ENCODE measurements at regions of chr1 and their contacts with region 1.

Region 1: DNA sequence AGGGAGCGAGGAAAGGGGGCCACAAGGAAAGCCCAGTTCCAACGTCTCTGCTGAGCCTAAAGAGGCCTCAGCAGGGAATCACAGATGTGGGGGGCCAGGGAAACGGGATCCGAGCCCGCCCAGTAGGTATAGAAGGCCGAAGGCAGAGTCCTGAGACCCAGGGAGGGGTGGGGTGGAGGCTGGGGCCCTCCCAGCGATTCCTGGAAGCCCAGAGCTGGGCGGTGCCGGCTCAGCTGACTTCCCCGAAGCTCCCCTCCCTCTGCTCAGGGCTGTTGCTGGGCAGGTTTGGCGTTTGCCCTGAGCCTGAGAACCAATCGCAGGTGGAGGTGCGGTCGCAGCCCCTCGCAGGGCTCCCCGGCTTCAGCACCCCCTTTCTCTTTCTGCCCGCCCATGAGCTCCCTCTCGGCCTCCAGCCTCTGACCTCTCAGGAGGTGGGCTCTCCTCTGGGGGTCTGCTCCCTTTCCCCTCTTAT is 12.8 kb downstream of the ADAMTSL4 start:
- DNase-seq: peak; percentile 95 to 98 (median 97)
- ATAC-seq: peak; percentile 82 to 87 (median 85)
- H3K4me3 ChIP-seq: peak overlapping the region; percentile 38 to 69 (median 60)
- H3K27ac ChIP-seq: peak overlapping the region; percentile 94 to 100 (median 100)
- H3K4me1 ChIP-seq: peaks cover 28 to 88% (median 75%) of the 10 kb centered on the region in 12 donors
- H3K27me3 ChIP-seq: no peaks in the 10 kb centered on the region
- CTCF ChIP-seq: no peak
- POLR2A ChIP-seq: no peak

Region 2: GRCh38 chr1:150363426-150364230 is 198.4 kb before region 1 on chr1 and contains the start of gene RPRD2:
- intact Hi-C with region 1: loop called in 1 of 10 experiments (anchors 10 kb)
- DNase-seq: peak; percentile 99 to 100 (median 100)
- ATAC-seq: peak; percentile 98 to 99 (median 99)
- H3K4me3 ChIP-seq: peak within 1 kb of the TSS; percentile 27 to 91 (median 72)
- H3K27ac ChIP-seq: peak within 1 kb of the TSS; percentile 92 to 99 (median 98)
- H3K4me1 ChIP-seq: peaks cover 0 to 28% (median 14%) of the 10 kb centered on the region in 12 donors
- H3K27me3 ChIP-seq: no peaks in the 10 kb centered on the region
- CTCF ChIP-seq: peak in 1 of 12 donors; percentile 11
- POLR2A ChIP-seq: peak in 1 of 2 donors; percentile 62
- total RNA-seq, gene RPRD2: 19.4 to 33.4 (median 25.3) TPM

Region 3: GRCh38 chr1:150578965-150579798 is 17.2 kb after region 1 on chr1 and contains the start of gene MCL1:
- intact Hi-C with region 1: loop called in 8 of 10 experiments (anchors 1 to 2 kb)
- DNase-seq: peak; percentile 94 to 96 (median 95)
- ATAC-seq: peak; percentile 80 to 94 (median 86)
- H3K4me3 ChIP-seq: peak within 1 kb of the TSS; percentile 80 to 99 (median 92)
- H3K27ac ChIP-seq: peak within 1 kb of the TSS; percentile 99 to 100 (median 100)
- H3K4me1 ChIP-seq: peaks cover 9 to 40% (median 26%) of the 10 kb centered on the region in 12 donors
- H3K27me3 ChIP-seq: no peaks in the 10 kb centered on the region
- CTCF ChIP-seq: peak in 2 of 12 donors; percentile 11 to 26
- POLR2A ChIP-seq: peak; percentile 63 to 96
- total RNA-seq, gene MCL1: 77.2 to 180 (median 104) TPM

Region 4: DNA sequence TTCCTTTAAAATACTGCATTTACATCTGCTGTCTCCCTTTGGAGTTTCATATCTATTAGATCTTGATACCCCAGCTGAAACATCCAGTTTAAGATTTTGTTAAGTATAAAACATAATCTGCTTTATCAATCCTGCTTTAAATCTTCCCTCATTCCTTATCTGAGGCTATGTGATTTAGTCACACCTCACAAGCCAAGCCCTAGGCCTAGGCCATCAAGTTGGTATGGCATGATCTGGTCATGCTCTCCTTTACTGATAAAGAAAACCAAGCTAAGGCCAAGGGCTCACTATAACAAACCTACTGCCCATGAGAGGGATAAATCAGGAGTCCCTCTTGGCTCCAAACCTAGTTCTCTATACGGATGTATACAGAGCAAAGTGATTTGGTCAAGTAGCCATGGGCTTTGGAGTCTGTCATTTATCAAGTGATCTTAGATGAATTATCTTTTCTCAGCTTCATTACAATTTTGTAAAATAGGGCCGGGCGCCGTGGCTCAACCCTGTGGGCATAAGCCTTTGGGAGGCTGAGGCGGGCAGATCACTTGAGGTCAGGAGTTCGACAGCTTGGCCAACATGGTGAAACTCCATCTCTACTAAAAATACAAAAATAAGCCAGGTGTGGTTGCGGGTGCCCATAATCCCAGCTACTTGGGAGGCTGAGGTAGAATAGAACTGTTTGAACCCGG is 44.6 kb after region 1 on chr1:
- intact Hi-C with region 1: no loop called
- DNase-seq: no peak
- ATAC-seq: no peak
- H3K4me3 ChIP-seq: no peak overlapping the region
- H3K27ac ChIP-seq: peak overlapping the region in 1 of 12 donors; percentile 5
- H3K4me1 ChIP-seq: peaks cover 5 to 46% (median 29%) of the 10 kb centered on the region in 12 donors
- H3K27me3 ChIP-seq: no peaks in the 10 kb centered on the region
- CTCF ChIP-seq: no peak
- POLR2A ChIP-seq: no peak

Region 5: GRCh38 chr1:150629115-150629928 is 67.3 kb after region 1 on chr1 and contains the start of gene ENSA:
- intact Hi-C with region 1: loop called in 4 of 10 experiments (anchors 2 to 5 kb)
- DNase-seq: peak; percentile 97 to 100 (median 98)
- ATAC-seq: peak; percentile 97 to 98 (median 97)
- H3K4me3 ChIP-seq: peak within 1 kb of the TSS; percentile 15 to 85 (median 70)
- H3K27ac ChIP-seq: peak within 1 kb of the TSS; percentile 85 to 99 (median 96)
- H3K4me1 ChIP-seq: peaks cover 3 to 35% (median 21%) of the 10 kb centered on the region in 12 donors
- H3K27me3 ChIP-seq: no peaks in the 10 kb centered on the region
- CTCF ChIP-seq: no peak
- POLR2A ChIP-seq: peak; percentile 82 to 85
- total RNA-seq, gene ENSA: 118 to 186 (median 130) TPM

Region 6: GRCh38 chr1:150925816-150926741 is 364.1 kb after region 1 on chr1 and contains the start of gene SETDB1:
- intact Hi-C with region 1: loop called in 1 of 10 experiments (anchors 5 kb)
- DNase-seq: peak; percentile 95 to 97 (median 96)
- ATAC-seq: peak; percentile 98 to 99 (median 99)
- H3K4me3 ChIP-seq: peak within 1 kb of the TSS; percentile 50 to 92 (median 74)
- H3K27ac ChIP-seq: peak within 1 kb of the TSS; percentile 51 to 92 (median 79)
- H3K4me1 ChIP-seq: peaks cover 0 to 30% (median 10%) of the 10 kb centered on the region in 12 donors
- H3K27me3 ChIP-seq: no peaks in the 10 kb centered on the region
- CTCF ChIP-seq: peak in 3 of 12 donors; percentile 13 to 36 (median 26)
- POLR2A ChIP-seq: peak in 1 of 2 donors; percentile 38
- total RNA-seq, gene SETDB1: 12.5 to 28.0 (median 17.5) TPM